Heart left ventricle (tissue), 16 donors: ENCODE measurements at regions of chr5 and their contacts with region 1.

Region 1: DNA sequence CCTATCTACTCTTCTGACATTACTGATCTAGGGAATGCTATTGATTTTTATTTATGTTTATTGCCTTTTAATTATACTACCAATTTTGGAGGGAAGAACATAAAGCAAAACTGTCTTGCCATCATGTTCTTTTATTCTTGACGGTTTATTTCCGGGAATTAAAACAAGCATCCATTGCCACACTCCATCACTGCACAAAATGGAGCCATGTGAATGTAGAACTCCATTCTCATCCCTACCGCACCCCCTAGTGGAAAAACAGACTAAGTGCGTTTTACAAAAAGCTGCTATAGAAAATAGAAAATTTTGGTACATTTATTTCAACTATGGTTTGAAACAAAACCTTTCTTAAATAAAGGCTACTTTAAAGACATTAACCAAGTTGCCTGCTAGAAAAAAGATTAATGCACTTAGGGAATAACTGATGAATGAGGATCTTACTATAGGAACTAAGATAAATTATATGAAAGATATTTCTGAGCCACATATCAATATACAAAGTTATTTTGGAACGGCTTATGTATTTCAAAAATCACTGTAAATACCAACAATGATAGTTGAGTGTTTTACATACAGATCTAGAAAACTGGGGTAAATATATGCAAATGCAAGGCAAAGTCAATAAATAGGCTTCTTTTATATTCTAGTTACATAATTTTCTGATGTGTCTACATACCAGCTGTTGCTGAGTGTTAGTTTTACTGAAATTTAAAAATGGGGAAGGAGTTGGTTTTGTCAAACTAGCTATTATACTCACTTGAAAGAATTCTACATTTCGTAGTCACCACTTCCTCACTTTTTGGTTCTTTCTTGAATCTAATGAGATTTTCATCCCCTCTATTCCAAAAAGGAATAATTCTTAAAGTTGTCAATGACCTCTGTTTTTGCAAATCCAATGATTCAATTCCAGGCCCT is 26.5 kb downstream of the OXCT1 start:
- DNase-seq: peak in 1 of 5 donors; percentile 28
- ATAC-seq: peak in 3 of 4 donors; percentile 67 to 81 (median 72)
- H3K4me3 ChIP-seq: no peak overlapping the region
- H3K27ac ChIP-seq: no peak overlapping the region
- H3K4me1 ChIP-seq: peaks cover 0 to 20% (median 0%) of the 10 kb centered on the region in 12 donors
- H3K27me3 ChIP-seq: no peaks in the 10 kb centered on the region
- CTCF ChIP-seq: peak; percentile 70 to 86 (median 82)
- POLR2A ChIP-seq: no peak

Region 2: GRCh38 chr5:41414601-41415000 is 429.1 kb before region 1 on chr5:
- intact Hi-C with region 1: no loop called
- DNase-seq: peak in 1 of 5 donors; percentile 62
- ATAC-seq: peak in 3 of 4 donors; percentile 52 to 83 (median 75)
- H3K4me3 ChIP-seq: no peak overlapping the region
- H3K27ac ChIP-seq: peak overlapping the region in 10 of 12 donors; percentile 0 to 65 (median 32)
- H3K4me1 ChIP-seq: peaks cover 0 to 39% (median 9%) of the 10 kb centered on the region in 12 donors
- H3K27me3 ChIP-seq: no peaks in the 10 kb centered on the region
- CTCF ChIP-seq: no peak
- POLR2A ChIP-seq: no peak

Region 3: GRCh38 chr5:41524174-41524573 is 319.5 kb before region 1 on chr5:
- intact Hi-C with region 1: loop called in 2 of 10 experiments (anchors 5 to 10 kb)
- DNase-seq: no peak
- ATAC-seq: no peak
- H3K4me3 ChIP-seq: no peak overlapping the region
- H3K27ac ChIP-seq: no peak overlapping the region
- H3K4me1 ChIP-seq: peaks cover 0 to 18% (median 1%) of the 10 kb centered on the region in 12 donors
- H3K27me3 ChIP-seq: no peaks in the 10 kb centered on the region
- CTCF ChIP-seq: peak in 5 of 12 donors; percentile 9 to 38 (median 22)
- POLR2A ChIP-seq: no peak

Region 4: GRCh38 chr5:41754857-41755256 is 88.9 kb before region 1 on chr5:
- intact Hi-C with region 1: loop called in 2 of 10 experiments (anchors 10 kb)
- DNase-seq: no peak
- ATAC-seq: no peak
- H3K4me3 ChIP-seq: no peak overlapping the region
- H3K27ac ChIP-seq: no peak overlapping the region
- H3K4me1 ChIP-seq: peaks cover 0 to 13% (median 0%) of the 10 kb centered on the region in 12 donors
- H3K27me3 ChIP-seq: no peaks in the 10 kb centered on the region
- CTCF ChIP-seq: peak in 4 of 12 donors; percentile 13 to 43 (median 30)
- POLR2A ChIP-seq: no peak